K562 (cell line): ENCODE measurements at regions of chr4 and their contacts with region 1.

Region 1: GRCh38 chr4:80215449-80216052 is 18.2 kb downstream of the PRDM8 start:
- DNase-seq: peak; percentile 20 to 49 (median 32)
- ATAC-seq: no peak
- H3K4me3 ChIP-seq: no peak overlapping the region
- H3K27ac ChIP-seq: no peak overlapping the region
- H3K4me1 ChIP-seq: peaks cover 0 to 21% of the 10 kb centered on the region in 2 experiments; a peak in 4 of 5 replicates
- H3K27me3 ChIP-seq: no peaks in the 10 kb centered on the region
- CTCF ChIP-seq: peak in 2 of 3 experiments; percentile 37 to 72; a peak in 4 of 6 replicates
- EP300 ChIP-seq: no peak
- POLR2A ChIP-seq: no peak
- RAD21 ChIP-seq: peak; percentile 82 to 87

Region 2: DNA sequence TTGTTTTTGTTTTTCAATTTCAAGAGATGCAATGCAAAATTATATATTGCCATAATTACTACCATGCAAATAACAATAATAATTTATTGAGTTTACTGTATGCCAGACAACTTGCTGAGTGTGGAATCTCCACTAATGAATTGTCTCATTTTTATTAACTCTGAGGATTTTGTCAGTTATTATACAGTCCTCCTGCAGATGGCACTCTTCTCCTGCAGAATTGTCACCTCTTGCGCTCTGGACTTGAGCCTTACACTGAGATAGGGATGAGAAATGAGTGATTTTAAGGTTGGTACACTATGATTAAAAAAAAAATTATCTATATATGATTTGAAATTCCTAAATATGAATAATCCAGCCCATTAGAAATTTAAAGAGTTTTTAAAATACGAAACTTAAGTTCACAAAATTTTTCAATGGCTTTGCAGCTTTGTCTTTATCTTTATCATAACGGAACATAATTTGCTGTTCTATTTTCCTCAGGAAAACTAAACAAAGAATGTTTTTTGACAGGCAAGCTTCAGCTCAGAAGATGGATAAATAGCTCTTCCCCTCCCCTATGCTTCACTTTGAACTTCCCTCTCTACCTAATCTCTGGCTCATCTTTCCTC is 1263.6 kb before region 1 on chr4:
- CTCF ChIA-PET with region 1: interaction called, 3 read pairs
- POLR2A ChIA-PET with region 1: no interaction called
- in situ Hi-C with region 1: no loop called
- intact Hi-C with region 1: loop called (anchors 1 kb)
- DNase-seq: peak; percentile 56 to 70 (median 58)
- ATAC-seq: peak; percentile 86
- H3K4me3 ChIP-seq: no peak overlapping the region
- H3K27ac ChIP-seq: no peak overlapping the region
- H3K4me1 ChIP-seq: peaks cover 0 to 4% of the 10 kb centered on the region in 2 experiments; a peak in 1 of 5 replicates
- H3K27me3 ChIP-seq: no peaks in the 10 kb centered on the region
- CTCF ChIP-seq: peak; percentile 58 to 84 (median 73)
- EP300 ChIP-seq: no peak
- POLR2A ChIP-seq: no peak
- RAD21 ChIP-seq: peak; percentile 76 to 91

Region 3: GRCh38 chr4:79576429-79576753 is 639.2 kb before region 1 on chr4:
- CTCF ChIA-PET with region 1: no interaction called
- POLR2A ChIA-PET with region 1: no interaction called
- in situ Hi-C with region 1: no loop called
- intact Hi-C with region 1: loop called (anchors 10 kb)
- DNase-seq: peak in 3 of 4 experiments; percentile 11 to 61 (median 27)
- ATAC-seq: peak; percentile 94
- H3K4me3 ChIP-seq: no peak overlapping the region
- H3K27ac ChIP-seq: no peak overlapping the region
- H3K4me1 ChIP-seq: no peaks in the 10 kb centered on the region; a peak in 2 of 5 replicates
- H3K27me3 ChIP-seq: no peaks in the 10 kb centered on the region
- CTCF ChIP-seq: peak; percentile 50 to 72 (median 62); a peak in 5 of 6 replicates
- EP300 ChIP-seq: no peak
- POLR2A ChIP-seq: no peak
- RAD21 ChIP-seq: peak; percentile 75 to 84

Region 4: DNA sequence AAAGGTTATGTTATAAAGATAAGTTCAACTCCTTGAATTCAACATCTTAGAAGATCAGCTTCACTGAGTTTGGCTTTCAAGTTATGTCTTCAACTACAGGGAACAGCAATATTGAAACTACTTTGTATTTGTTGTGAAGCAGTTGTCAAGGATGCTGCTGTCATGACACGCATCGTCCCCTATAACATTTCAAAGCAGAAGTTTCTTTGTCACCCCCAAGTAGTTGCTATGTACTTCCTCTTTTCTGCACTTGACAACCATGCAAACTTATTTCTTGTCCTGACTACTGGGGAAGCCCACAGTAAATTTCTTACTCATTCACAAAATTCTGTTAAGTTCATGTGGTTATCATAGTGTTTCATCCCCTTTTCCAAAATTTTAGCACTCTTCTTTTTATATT is 156.8 kb before region 1 on chr4:
- CTCF ChIA-PET with region 1: no interaction called
- POLR2A ChIA-PET with region 1: no interaction called
- in situ Hi-C with region 1: no loop called
- intact Hi-C with region 1: no loop called
- DNase-seq: peak in 2 of 4 experiments; percentile 26 to 63
- ATAC-seq: peak; percentile 77
- H3K4me3 ChIP-seq: no peak overlapping the region
- H3K27ac ChIP-seq: peak overlapping the region; percentile 22; the same call in 1 of the 3 replicates
- H3K4me1 ChIP-seq: peaks cover 4% of the 10 kb centered on the region in 2 experiments; a peak in 2 of 5 replicates
- H3K27me3 ChIP-seq: no peaks in the 10 kb centered on the region
- CTCF ChIP-seq: no peak
- EP300 ChIP-seq: no peak
- POLR2A ChIP-seq: no peak
- RAD21 ChIP-seq: no peak

Region 5: DNA sequence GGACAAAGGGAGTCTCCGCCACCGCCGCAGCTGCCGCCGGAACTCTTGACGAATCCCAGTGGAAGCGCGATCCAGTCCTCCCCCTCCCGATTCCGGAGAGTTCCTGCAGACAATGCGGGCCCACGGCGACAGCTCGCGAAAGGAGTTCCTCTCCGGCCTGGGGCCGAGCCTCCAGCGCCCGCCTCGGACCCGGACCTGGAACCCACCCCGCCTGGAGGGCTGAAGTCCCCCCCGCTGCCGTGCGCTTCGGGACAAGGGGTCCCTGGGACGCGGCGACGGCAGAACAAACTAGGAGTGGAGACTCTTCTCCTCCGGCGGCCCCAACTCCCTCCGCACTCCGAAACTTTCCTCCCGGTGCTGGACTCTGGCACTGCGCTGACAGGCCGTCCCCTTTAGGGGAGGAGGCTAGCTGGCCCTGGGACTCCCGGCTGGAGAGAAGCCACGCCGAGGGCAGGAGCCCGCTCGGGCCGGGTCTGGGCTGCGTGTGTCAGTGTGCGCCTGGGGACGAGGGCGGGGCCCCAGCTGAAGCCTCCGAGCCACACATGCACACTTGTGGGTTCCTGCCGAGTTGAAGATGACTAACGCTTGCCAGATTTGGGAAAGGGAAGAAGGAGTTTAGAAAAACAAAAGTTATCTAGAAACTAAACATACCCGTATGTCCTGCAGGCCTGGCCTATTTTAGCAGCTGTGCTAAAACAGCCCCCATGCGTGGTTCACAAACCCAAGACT is 142.6 kb before region 1 on chr4 and contains the start of gene ANTXR2:
- CTCF ChIA-PET with region 1: no interaction called
- POLR2A ChIA-PET with region 1: interaction called, 5 read pairs
- in situ Hi-C with region 1: no loop called
- intact Hi-C with region 1: loop called (anchors 2 kb)
- DNase-seq: peak; percentile 82 to 90 (median 85)
- ATAC-seq: peak; percentile 93
- H3K4me3 ChIP-seq: peak within 1 kb of the TSS; percentile 89
- H3K27ac ChIP-seq: peak within 1 kb of the TSS; percentile 87
- H3K4me1 ChIP-seq: peaks cover 12 to 27% of the 10 kb centered on the region in 2 experiments; a peak in 4 of 5 replicates
- H3K27me3 ChIP-seq: no peaks in the 10 kb centered on the region
- CTCF ChIP-seq: no peak
- EP300 ChIP-seq: peak; percentile 38; the same call in 1 of the 2 replicates
- POLR2A ChIP-seq: peak; percentile 77
- RAD21 ChIP-seq: peak in 1 of 2 experiments; percentile 27; a peak in 3 of 4 replicates
- polyA plus RNA-seq, gene ANTXR2: 10.1 to 26.6 TPM

Region 6: GRCh38 chr4:80142394-80143306 is 72.9 kb before region 1 on chr4:
- CTCF ChIA-PET with region 1: no interaction called
- POLR2A ChIA-PET with region 1: no interaction called
- in situ Hi-C with region 1: no loop called
- intact Hi-C with region 1: loop called (anchors 5 kb)
- DNase-seq: peak in 3 of 4 experiments; percentile 38 to 76 (median 47)
- ATAC-seq: peak; percentile 51
- H3K4me3 ChIP-seq: no peak overlapping the region
- H3K27ac ChIP-seq: peak overlapping the region; percentile 75; the same call in 2 of the 3 replicates
- H3K4me1 ChIP-seq: peaks cover 8 to 66% of the 10 kb centered on the region in 2 experiments
- H3K27me3 ChIP-seq: no peaks in the 10 kb centered on the region
- CTCF ChIP-seq: no peak
- EP300 ChIP-seq: no peak; the same call in 1 of the 2 replicates
- POLR2A ChIP-seq: no peak
- RAD21 ChIP-seq: no peak

Region 7: DNA sequence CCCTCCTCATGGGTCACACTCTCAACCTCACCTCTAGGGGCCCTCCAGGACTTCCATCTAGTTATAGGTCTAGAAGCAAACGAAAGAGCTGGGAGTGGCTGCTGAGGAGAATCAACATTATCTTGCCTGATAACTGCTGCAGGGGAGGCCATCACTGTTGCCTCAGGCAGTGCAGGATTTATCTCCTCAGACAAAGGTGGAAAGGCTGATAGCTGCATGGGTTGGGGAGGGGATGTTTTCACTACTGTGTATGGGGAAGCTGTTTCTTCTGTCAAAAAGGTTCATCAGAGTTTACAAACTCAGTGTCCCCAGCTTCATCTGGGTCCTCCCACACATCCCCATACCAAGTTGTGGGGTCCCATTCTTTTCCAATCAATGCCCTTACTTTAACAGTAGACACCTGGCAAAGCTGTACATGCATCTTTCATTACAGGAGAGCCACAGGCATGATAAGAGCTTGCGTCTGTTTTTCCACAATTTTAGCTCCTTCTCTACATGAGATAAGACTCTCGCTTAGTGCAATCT is 35.9 kb before region 1 on chr4:
- CTCF ChIA-PET with region 1: no interaction called
- POLR2A ChIA-PET with region 1: interaction called, 3 read pairs
- in situ Hi-C with region 1: no loop called
- intact Hi-C with region 1: loop called (anchors 1 kb)
- DNase-seq: peak; percentile 27 to 90 (median 59)
- ATAC-seq: peak; percentile 99
- H3K4me3 ChIP-seq: no peak overlapping the region
- H3K27ac ChIP-seq: peak overlapping the region; percentile 43; the same call in 2 of the 3 replicates
- H3K4me1 ChIP-seq: peaks cover 0 to 16% of the 10 kb centered on the region in 2 experiments
- H3K27me3 ChIP-seq: no peaks in the 10 kb centered on the region
- CTCF ChIP-seq: peak; percentile 41 to 51 (median 48); a peak in 5 of 6 replicates
- EP300 ChIP-seq: peak; percentile 92
- POLR2A ChIP-seq: no peak
- RAD21 ChIP-seq: peak; percentile 40 to 47